A673 (cell line): ENCODE measurements at regions of chr15 and their contacts with region 1.

Region 1: DNA sequence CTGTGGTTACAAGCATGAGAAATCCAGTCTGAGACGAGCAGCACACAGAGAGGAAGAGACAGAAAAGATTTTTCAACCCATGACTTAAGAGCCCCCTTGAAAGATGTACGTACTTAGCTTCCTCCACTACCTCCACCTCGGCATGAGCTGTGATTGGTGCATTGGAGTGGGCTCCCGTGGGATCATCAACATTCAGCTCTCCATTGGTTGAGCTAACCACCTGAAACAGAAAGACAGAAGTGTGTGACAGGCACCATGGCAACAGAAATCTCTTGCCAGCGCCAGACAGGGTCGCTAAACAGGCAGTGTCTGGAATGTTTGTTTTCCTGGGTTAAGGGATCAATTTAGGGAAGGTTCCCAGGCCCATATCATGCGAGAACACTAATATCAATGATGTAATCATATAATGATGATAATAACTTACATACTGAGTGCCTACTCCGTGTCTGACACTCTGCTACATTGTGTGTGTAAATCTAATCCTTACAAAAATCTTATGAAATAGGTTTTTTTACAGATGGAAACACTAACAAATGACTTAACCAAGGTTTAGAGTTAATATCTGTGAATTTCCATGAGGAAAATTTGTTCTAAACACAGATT is 17.5 kb upstream of the PPIB start:
- DNase-seq: no peak
- H3K4me3 ChIP-seq: no peak overlapping the region
- H3K27ac ChIP-seq: no peak overlapping the region
- H3K4me1 ChIP-seq: no peaks in the 10 kb centered on the region
- H3K27me3 ChIP-seq: no peaks in the 10 kb centered on the region
- CTCF ChIP-seq: no peak

Region 2: DNA sequence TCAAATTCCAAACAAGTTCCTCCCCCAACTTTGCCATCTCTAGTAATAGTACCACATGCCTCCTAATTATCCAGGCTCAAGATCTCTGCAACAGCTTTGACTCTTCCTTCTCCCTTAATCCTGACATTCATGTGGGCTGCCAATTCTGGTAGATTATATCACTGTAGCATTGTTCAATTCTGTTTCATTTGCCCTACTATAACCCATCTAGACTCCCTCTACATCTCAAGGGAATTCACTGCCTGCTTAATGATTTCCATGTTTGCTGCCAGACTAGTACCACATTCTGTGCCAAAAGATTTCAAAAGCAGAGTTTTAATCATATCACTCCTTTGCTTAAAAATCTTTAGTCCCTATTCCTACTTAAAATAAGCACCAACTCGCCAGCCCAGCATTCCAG is 17.1 kb after region 1 on chr15:
- CTCF ChIA-PET with region 1: interaction called, 12 read pairs
- POLR2A ChIA-PET with region 1: interaction called, 10 read pairs
- intact Hi-C with region 1: no loop called
- DNase-seq: peak; percentile 91
- H3K4me3 ChIP-seq: no peak overlapping the region
- H3K27ac ChIP-seq: peak overlapping the region; percentile 61
- H3K4me1 ChIP-seq: peaks cover 22% of the 10 kb centered on the region
- H3K27me3 ChIP-seq: no peaks in the 10 kb centered on the region
- CTCF ChIP-seq: no peak